ENCODE measurements at regions of chrX and their contacts with region 1.

Region 1: GRCh38 chrX:109536439-109537336 is at the start of gene NXT2:
- DNase-seq: peak; percentile 86
- H3K4me3 ChIP-seq: peak within 1 kb of the TSS; percentile 44 to 46
- H3K27ac ChIP-seq: peak within 1 kb of the TSS; percentile 89 to 91
- H3K4me1 ChIP-seq: no peaks in the 10 kb centered on the region
- H3K27me3 ChIP-seq: no peaks in the 10 kb centered on the region
- CTCF ChIP-seq: no peak
- POLR2A ChIP-seq: peak; percentile 53
- total RNA-seq, gene NXT2: 11.0 to 55.2 TPM

Region 2: GRCh38 chrX:109732780-109733657 is 196.3 kb after region 1 on chrX and contains the start of gene ACSL4:
- intact Hi-C with region 1: loop called (anchors 5 kb)
- DNase-seq: peak; percentile 79
- H3K4me3 ChIP-seq: peak within 1 kb of the TSS; percentile 48 to 49
- H3K27ac ChIP-seq: peak within 1 kb of the TSS; percentile 71 to 76
- H3K4me1 ChIP-seq: no peaks in the 10 kb centered on the region
- H3K27me3 ChIP-seq: no peaks in the 10 kb centered on the region
- CTCF ChIP-seq: no peak
- POLR2A ChIP-seq: peak; percentile 67
- total RNA-seq, gene ACSL4: 22.9 to 118 TPM